CD4-positive, alpha-beta T cell (primary cell): ENCODE measurements at regions of chr9 and their contacts with region 1.

Region 1: DNA sequence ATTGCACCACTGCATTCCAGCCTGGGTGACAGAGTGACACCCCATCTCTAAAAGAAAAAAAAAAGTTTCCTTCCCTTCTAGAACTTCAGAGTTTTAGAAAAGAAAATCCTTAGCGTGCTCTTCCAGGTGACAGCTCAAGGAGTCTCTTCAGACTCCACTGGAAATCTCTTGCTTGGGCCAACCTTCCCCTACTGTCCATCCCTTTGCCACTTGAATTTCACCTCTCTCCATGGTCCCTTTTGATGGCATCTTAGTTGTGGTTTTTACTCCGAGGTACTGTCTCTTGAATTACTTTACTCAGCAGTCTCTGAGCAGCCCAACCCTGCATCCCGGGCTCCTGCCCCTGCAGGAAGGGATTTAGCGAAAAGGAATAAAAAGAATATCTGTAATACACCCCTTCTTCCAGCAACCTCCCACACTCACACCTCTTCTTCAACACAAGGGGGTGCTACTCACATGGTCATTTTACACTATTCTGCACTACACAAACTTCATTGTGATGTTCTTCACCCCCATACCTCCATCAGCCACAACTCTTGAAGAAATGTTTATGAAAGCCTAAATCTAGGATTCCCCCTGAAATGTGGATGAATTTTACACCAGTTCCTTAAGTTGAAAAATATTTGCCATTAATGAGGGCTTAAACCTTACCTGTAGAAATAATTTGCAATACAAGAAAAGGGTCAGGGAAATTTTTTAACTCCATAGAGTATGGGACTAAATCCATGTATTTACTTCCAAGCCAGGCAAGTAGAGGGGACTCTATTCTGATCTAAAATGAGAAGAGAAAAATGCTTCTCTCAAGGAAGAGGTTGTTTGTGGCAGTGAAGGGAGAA is 25.9 kb downstream of the TPD52L3 start:
- DNase-seq: peak in 10 of 14 experiments; percentile 2 to 74 (median 11)
- ATAC-seq: peak; percentile 85
- H3K4me3 ChIP-seq: no peak overlapping the region
- H3K4me3 Mint-ChIP-seq: no peak overlapping the region
- H3K27ac ChIP-seq: no peak overlapping the region
- H3K27ac Mint-ChIP-seq: no peak overlapping the region
- H3K4me1 ChIP-seq: no peaks in the 10 kb centered on the region
- H3K4me1 Mint-ChIP-seq: no peaks in the 10 kb centered on the region
- H3K27me3 ChIP-seq: no peaks in the 10 kb centered on the region
- H3K27me3 Mint-ChIP-seq: peaks cover 6% of the 10 kb centered on the region
- CTCF ChIP-seq: peak; percentile 80

Region 2: DNA sequence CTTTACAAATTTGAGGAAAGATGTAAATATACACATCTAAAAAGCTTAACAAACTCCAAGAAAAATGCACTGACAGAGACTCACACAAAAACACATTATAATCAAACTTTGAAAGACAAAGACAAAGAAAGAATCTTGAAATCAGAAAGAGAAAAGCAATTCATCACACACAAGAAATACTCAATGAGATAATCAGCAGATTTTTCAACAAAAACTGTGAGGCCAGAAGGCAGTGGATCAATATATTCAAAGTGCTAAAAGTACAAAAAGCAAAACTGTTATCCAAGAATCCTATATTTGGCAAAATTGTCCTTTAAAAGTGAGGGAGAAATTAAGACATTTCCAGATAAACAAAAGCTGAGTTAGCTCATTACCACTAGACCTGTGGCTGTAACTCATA is 19.8 kb before region 1 on chr9:
- CTCF ChIA-PET with region 1: no interaction called
- POLR2A ChIA-PET with region 1: no interaction called
- intact Hi-C with region 1: no loop called
- DNase-seq: no peak
- ATAC-seq: no peak
- H3K4me3 ChIP-seq: no peak overlapping the region
- H3K4me3 Mint-ChIP-seq: no peak overlapping the region
- H3K27ac ChIP-seq: no peak overlapping the region
- H3K27ac Mint-ChIP-seq: no peak overlapping the region
- H3K4me1 ChIP-seq: no peaks in the 10 kb centered on the region
- H3K4me1 Mint-ChIP-seq: no peaks in the 10 kb centered on the region
- H3K27me3 ChIP-seq: peaks cover 0 to 5% of the 10 kb centered on the region in 2 experiments
- H3K27me3 Mint-ChIP-seq: peaks cover 28% of the 10 kb centered on the region
- CTCF ChIP-seq: no peak

Region 3: DNA sequence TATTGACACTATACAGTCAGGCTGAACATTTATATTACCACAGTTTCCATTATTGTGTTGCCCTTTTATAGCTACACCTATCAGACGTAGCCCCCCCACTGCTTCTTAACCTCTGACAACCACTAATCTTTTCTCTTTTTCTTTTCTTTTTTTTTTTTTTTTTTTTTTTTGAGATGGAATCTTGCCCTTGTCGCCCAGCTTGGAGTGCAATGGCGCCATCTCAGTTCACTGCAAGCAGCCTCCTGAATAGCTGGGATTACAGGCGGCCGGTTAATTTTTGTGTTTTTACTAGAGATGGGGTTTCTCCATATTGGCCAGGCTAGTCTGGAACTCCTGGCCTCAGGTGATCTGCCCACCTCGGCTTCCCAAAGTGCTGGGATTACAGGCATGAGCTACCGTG is 134.3 kb after region 1 on chr9:
- CTCF ChIA-PET with region 1: no interaction called
- POLR2A ChIA-PET with region 1: no interaction called
- intact Hi-C with region 1: loop called (anchors 1 to 5 kb)
- DNase-seq: peak in 3 of 14 experiments; percentile 2 to 21 (median 4)
- ATAC-seq: peak; percentile 21
- H3K4me3 ChIP-seq: no peak overlapping the region
- H3K4me3 Mint-ChIP-seq: no peak overlapping the region
- H3K27ac ChIP-seq: no peak overlapping the region
- H3K27ac Mint-ChIP-seq: no peak overlapping the region
- H3K4me1 ChIP-seq: no peaks in the 10 kb centered on the region
- H3K4me1 Mint-ChIP-seq: peaks cover 9% of the 10 kb centered on the region
- H3K27me3 ChIP-seq: no peaks in the 10 kb centered on the region
- H3K27me3 Mint-ChIP-seq: no peaks in the 10 kb centered on the region
- CTCF ChIP-seq: no peak

Region 4: GRCh38 chr9:6566409-6567139 is 212.5 kb after region 1 on chr9:
- CTCF ChIA-PET with region 1: interaction called, 3 read pairs
- POLR2A ChIA-PET with region 1: no interaction called
- intact Hi-C with region 1: loop called (anchors 1 kb)
- DNase-seq: peak in 3 of 14 experiments; percentile 12 to 56 (median 27)
- ATAC-seq: no peak
- H3K4me3 ChIP-seq: no peak overlapping the region
- H3K4me3 Mint-ChIP-seq: no peak overlapping the region
- H3K27ac ChIP-seq: no peak overlapping the region
- H3K27ac Mint-ChIP-seq: no peak overlapping the region
- H3K4me1 ChIP-seq: peaks cover 6% of the 10 kb centered on the region
- H3K4me1 Mint-ChIP-seq: no peaks in the 10 kb centered on the region
- H3K27me3 ChIP-seq: no peaks in the 10 kb centered on the region
- H3K27me3 Mint-ChIP-seq: peaks cover 7% of the 10 kb centered on the region
- CTCF ChIP-seq: no peak

Region 5: DNA sequence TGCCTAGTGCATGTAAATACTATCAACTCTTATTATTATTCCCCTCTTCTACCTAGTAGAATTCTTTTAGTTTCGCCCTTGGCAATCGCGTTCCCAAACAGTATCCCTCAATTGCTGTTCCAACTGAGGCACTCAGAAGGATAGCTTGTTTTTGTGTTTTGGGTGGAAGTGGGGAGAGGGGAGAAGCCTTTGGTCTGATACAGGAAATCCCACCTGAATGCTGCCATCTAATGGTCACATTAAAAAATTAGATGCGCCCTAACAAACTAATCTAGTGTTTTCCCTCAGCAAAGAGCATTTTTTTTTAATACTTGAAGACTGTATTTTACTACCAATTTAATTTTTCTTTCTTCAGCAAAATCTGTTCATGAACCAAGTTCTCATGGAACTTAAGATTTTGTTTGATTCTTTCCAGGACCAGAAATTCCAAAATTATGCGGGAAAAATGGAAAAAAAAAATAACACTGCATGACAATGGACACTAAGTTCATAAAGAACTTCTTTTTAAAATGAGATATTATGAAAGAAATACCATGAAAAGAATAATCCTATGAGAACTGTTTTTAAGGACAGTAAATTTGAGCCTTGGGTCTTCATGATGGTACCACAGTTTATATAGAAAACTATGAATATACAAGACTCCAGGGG is 313.7 kb after region 1 on chr9:
- CTCF ChIA-PET with region 1: no interaction called
- POLR2A ChIA-PET with region 1: no interaction called
- intact Hi-C with region 1: loop called in 1 of 2 experiments (anchors 5 kb)
- DNase-seq: peak in 3 of 14 experiments; percentile 24 to 39 (median 34)
- ATAC-seq: no peak
- H3K4me3 ChIP-seq: no peak overlapping the region
- H3K4me3 Mint-ChIP-seq: no peak overlapping the region
- H3K27ac ChIP-seq: no peak overlapping the region
- H3K27ac Mint-ChIP-seq: no peak overlapping the region
- H3K4me1 ChIP-seq: no peaks in the 10 kb centered on the region
- H3K4me1 Mint-ChIP-seq: no peaks in the 10 kb centered on the region
- H3K27me3 ChIP-seq: no peaks in the 10 kb centered on the region
- H3K27me3 Mint-ChIP-seq: no peaks in the 10 kb centered on the region
- CTCF ChIP-seq: peak; percentile 49

Region 6: GRCh38 chr9:6681147-6681956 is 327.3 kb after region 1 on chr9:
- CTCF ChIA-PET with region 1: no interaction called
- POLR2A ChIA-PET with region 1: no interaction called
- intact Hi-C with region 1: loop called in 1 of 2 experiments (anchors 10 kb)
- DNase-seq: peak; percentile 82 to 97 (median 88)
- ATAC-seq: peak; percentile 90
- H3K4me3 ChIP-seq: peak overlapping the region; percentile 85
- H3K4me3 Mint-ChIP-seq: peak overlapping the region; percentile 89
- H3K27ac ChIP-seq: peak overlapping the region; percentile 96 to 98
- H3K27ac Mint-ChIP-seq: peak overlapping the region; percentile 99
- H3K4me1 ChIP-seq: peaks cover 23% of the 10 kb centered on the region
- H3K4me1 Mint-ChIP-seq: peaks cover 17% of the 10 kb centered on the region
- H3K27me3 ChIP-seq: no peaks in the 10 kb centered on the region
- H3K27me3 Mint-ChIP-seq: no peaks in the 10 kb centered on the region
- CTCF ChIP-seq: no peak

Region 7: GRCh38 chr9:6739218-6739617 is 385.1 kb after region 1 on chr9:
- CTCF ChIA-PET with region 1: no interaction called
- POLR2A ChIA-PET with region 1: no interaction called
- intact Hi-C with region 1: loop called in 1 of 2 experiments (anchors 10 kb)
- DNase-seq: no peak
- ATAC-seq: no peak
- H3K4me3 ChIP-seq: no peak overlapping the region
- H3K4me3 Mint-ChIP-seq: no peak overlapping the region
- H3K27ac ChIP-seq: no peak overlapping the region
- H3K27ac Mint-ChIP-seq: no peak overlapping the region
- H3K4me1 ChIP-seq: no peaks in the 10 kb centered on the region
- H3K4me1 Mint-ChIP-seq: no peaks in the 10 kb centered on the region
- H3K27me3 ChIP-seq: no peaks in the 10 kb centered on the region
- H3K27me3 Mint-ChIP-seq: no peaks in the 10 kb centered on the region
- CTCF ChIP-seq: no peak

Region 8: DNA sequence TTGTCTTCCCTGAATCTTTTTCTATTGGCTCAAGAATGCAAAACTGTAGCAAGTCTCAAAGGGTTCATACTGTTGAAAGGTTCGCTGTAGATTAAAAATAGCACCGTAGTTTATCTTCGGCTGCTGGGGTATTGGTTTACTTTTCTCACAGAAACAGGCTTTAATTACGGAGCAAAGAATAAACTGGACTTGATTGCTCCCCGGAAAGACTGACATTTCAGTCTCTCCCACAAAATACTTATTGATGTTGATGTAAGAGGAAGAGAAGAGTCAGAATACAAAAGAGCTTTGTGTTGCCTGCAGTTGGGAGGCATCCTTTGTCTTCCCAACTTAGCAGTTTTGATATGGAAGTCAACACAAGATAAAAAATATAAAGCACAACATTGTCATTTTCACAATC is 1629.4 kb after region 1 on chr9:
- CTCF ChIA-PET with region 1: no interaction called
- POLR2A ChIA-PET with region 1: no interaction called
- intact Hi-C with region 1: no loop called
- DNase-seq: no peak
- ATAC-seq: no peak
- H3K4me3 ChIP-seq: no peak overlapping the region
- H3K4me3 Mint-ChIP-seq: no peak overlapping the region
- H3K27ac ChIP-seq: no peak overlapping the region
- H3K27ac Mint-ChIP-seq: peak overlapping the region; percentile 0
- H3K4me1 ChIP-seq: peaks cover 22% of the 10 kb centered on the region
- H3K4me1 Mint-ChIP-seq: peaks cover 39% of the 10 kb centered on the region
- H3K27me3 ChIP-seq: no peaks in the 10 kb centered on the region
- H3K27me3 Mint-ChIP-seq: no peaks in the 10 kb centered on the region
- CTCF ChIP-seq: no peak